HepG2 (cell line): ENCODE measurements at regions of chr22 and their contacts with region 1.

Region 1: GRCh38 chr22:25465949-25466348 is 98.5 kb upstream of the GRK3 start:
- DNase-seq: no peak
- ATAC-seq: no peak
- H3K4me3 ChIP-seq: no peak overlapping the region
- H3K27ac ChIP-seq: no peak overlapping the region
- H3K4me1 ChIP-seq: no peaks in the 10 kb centered on the region
- H3K27me3 ChIP-seq: no peaks in the 10 kb centered on the region
- CTCF ChIP-seq: no peak
- EP300 ChIP-seq: no peak
- POLR2A ChIP-seq: no peak
- RAD21 ChIP-seq: no peak

Region 2: DNA sequence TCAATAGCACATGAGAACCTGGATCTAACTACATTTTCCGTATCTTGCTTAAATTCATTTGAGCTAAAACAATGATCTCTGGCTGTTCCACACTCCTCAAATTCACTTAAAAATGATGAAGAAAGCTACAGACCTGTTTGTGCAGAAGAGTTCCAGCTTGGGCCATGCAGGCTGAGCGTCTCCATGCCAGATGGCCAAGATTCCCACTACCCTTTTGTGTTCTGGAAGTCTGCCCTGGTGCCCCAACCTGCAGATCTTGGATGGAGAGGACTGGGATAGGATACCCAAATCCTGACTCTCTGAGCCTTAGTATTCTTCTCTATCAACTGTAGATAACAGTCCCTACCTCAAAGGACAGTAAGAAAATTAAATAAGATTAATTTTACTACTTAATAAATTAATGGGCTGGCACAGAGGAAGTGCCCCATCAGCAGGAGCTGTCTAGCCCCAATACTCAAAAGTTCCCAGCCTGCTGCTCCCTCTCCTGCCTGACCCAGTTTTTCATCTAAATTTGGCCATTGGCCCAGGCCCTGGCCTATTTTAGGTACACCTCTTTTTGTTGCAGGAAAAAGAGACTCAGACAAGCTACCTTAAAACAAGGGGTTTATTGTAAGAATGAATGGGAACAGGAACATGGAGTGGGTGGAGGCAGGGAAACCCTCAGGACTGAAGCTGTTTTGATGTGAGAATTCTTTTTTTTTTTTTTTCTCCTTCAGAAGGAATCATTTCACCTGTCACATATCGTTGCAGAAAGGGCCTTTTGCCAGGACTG is 17.1 kb after region 1 on chr22:
- CTCF ChIA-PET with region 1: no interaction called
- POLR2A ChIA-PET with region 1: no interaction called
- in situ Hi-C with region 1: no loop called
- intact Hi-C with region 1: no loop called
- DNase-seq: no peak
- ATAC-seq: no peak
- H3K4me3 ChIP-seq: no peak overlapping the region
- H3K27ac ChIP-seq: no peak overlapping the region
- H3K4me1 ChIP-seq: peaks cover 24% of the 10 kb centered on the region
- H3K27me3 ChIP-seq: no peaks in the 10 kb centered on the region
- CTCF ChIP-seq: no peak
- EP300 ChIP-seq: no peak
- POLR2A ChIP-seq: no peak
- RAD21 ChIP-seq: no peak

Region 3: DNA sequence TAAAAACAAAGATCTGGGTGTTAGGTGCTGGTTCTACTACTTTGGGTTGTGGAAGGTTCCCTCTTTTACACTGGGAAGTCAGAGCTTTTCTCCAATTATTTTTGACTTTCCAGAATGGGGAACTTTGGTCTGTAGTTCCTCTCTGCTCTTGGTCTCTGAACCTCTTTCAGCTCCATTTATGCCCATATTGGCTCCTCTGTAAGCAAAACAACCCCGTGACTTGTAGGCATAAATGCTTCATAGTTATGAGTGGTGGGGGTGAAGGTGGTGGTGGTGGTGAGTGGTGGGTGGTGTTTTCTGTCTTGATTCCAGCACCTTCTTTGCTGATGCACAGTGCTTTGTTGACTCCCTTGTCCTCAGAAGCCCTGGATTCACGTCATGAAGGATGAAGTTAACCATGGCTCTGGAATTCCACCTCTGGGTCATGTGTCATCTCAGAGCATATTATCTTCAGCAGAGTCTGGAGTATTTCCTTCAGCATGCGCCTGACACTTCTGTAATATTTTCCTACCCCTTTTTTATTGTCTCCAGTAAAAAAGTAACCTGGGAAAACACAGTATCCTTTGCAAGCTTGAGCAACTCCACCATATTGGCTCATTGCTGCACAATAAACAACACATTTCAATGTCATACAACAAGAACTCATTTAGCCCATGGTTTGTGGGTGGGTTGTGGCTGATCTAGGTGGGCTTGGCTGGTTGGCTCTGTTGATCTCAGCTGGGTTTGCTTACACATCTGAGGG is 74.4 kb after region 1 on chr22:
- CTCF ChIA-PET with region 1: no interaction called
- POLR2A ChIA-PET with region 1: no interaction called
- in situ Hi-C with region 1: no loop called
- intact Hi-C with region 1: loop called (anchors 5 kb)
- DNase-seq: no peak
- ATAC-seq: no peak
- H3K4me3 ChIP-seq: no peak overlapping the region
- H3K27ac ChIP-seq: no peak overlapping the region
- H3K4me1 ChIP-seq: peaks cover 27% of the 10 kb centered on the region
- H3K27me3 ChIP-seq: no peaks in the 10 kb centered on the region; a peak in 1 of 5 replicates
- CTCF ChIP-seq: no peak
- EP300 ChIP-seq: no peak
- POLR2A ChIP-seq: no peak
- RAD21 ChIP-seq: no peak

Region 4: GRCh38 chr22:25774575-25775026 is 308.7 kb after region 1 on chr22:
- CTCF ChIA-PET with region 1: interaction called, 32 read pairs
- POLR2A ChIA-PET with region 1: no interaction called
- in situ Hi-C with region 1: loop called (anchors 5 kb)
- intact Hi-C with region 1: loop called (anchors 1 kb)
- DNase-seq: no peak
- ATAC-seq: peak; percentile 77
- H3K4me3 ChIP-seq: no peak overlapping the region
- H3K27ac ChIP-seq: no peak overlapping the region
- H3K4me1 ChIP-seq: 0 out of 2 replicates have a peak, but pooled peaks cover 6% of the 10 kb centered on the region
- H3K27me3 ChIP-seq: peaks cover 2 to 18% of the 10 kb centered on the region in 2 experiments; a peak in 3 of 5 replicates
- CTCF ChIP-seq: peak; percentile 91
- EP300 ChIP-seq: no peak
- POLR2A ChIP-seq: no peak
- RAD21 ChIP-seq: peak; percentile 60